ENCODE measurements at regions of chr10 and their contacts with region 1.

Region 1: GRCh38 chr10:42552493-42553407 is 85.6 kb downstream of the ZNF33B start:
- DNase-seq: peak; percentile 94
- H3K4me3 Mint-ChIP-seq: peak overlapping the region; percentile 99
- H3K27ac Mint-ChIP-seq: peak overlapping the region; percentile 98
- H3K4me1 Mint-ChIP-seq: peaks cover 38% of the 10 kb centered on the region
- H3K27me3 Mint-ChIP-seq: no peaks in the 10 kb centered on the region

Region 2: GRCh38 chr10:42753126-42753506 is 200.4 kb after region 1 on chr10:
- intact Hi-C with region 1: loop called (anchors 10 kb)
- DNase-seq: peak; percentile 55
- H3K4me3 Mint-ChIP-seq: peak overlapping the region; percentile 45
- H3K27ac Mint-ChIP-seq: no peak overlapping the region
- H3K4me1 Mint-ChIP-seq: peaks cover 5% of the 10 kb centered on the region
- H3K27me3 Mint-ChIP-seq: peaks cover 54% of the 10 kb centered on the region

Region 3: DNA sequence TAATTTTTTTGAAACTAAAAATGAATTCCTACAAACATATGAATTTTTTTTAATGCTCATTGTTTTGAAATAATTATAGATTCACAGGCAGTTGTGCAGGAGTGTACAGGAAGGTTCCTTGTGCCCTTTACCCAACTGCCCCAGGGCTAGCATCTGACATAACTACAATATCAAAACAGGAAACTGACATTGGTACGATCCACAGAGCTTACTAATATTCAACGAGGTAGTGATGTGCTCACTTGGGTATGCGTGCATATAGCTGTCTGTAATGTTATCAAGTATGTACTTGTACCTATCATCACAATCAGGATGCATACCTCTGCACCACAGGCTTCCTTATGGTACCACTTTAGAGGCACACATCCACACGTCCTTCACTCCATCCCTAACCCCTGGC is 298.2 kb after region 1 on chr10:
- intact Hi-C with region 1: no loop called
- DNase-seq: no peak
- H3K4me3 Mint-ChIP-seq: no peak overlapping the region
- H3K27ac Mint-ChIP-seq: no peak overlapping the region
- H3K4me1 Mint-ChIP-seq: no peaks in the 10 kb centered on the region
- H3K27me3 Mint-ChIP-seq: peaks cover 11% of the 10 kb centered on the region

Measured in activated T-helper 1 cell treated with anti-CD3 and anti-CD28 coated beads, Interleukin-12 subunit alpha, Interleukin-12 subunit beta, Interleukin-2, Interleukin-4 antibody, amounts not matched to agents 30 ng/mL and 10 ng/mL and 1 ng/mL, durations not matched to agents 14 hours and 24 hours and 36 hours (primary cell).